A549 (cell line): ENCODE measurements at regions of chr19 and their contacts with region 1.

Region 1: DNA sequence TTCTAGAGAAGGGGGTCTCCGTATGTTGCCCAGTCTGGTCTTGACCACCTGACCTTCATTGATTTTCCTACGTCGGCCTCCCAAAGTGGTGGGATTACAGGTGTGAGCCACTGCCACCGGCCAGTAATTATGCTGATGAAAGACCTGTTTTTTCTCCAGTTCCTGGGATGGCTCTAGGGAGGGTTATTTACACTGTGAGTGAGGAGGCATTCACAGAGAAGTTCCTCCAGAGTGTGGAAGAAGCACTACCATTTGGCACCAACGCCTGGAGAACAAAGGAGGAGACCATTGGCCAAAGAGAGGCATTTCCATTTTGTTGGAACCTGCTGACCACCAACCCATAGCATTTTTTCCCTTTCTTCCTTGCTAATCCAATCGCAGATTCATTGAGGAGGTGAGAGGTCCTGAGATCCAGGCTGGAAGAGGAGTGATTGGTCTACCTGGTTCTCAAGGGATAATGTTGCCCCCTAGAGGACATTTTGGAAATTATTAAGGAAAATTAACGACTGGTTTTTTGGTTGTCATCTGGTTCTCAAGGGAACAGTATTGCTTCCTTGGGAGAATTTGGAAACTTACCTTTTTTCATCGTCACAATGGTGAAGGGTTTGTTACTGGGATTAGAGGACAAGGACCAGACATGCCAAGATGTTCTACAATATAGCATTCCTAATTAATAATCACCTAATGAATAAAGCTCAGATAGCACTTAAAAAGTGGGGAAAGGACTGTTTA is 5.5 kb upstream of the SAE1 start:
- DNase-seq: peak; percentile 86 to 90
- ATAC-seq: peak; percentile 84 to 85
- H3K4me3 ChIP-seq: no peak overlapping the region
- H3K27ac ChIP-seq: peak overlapping the region in 1 of 2 experiments; percentile 51; a peak in 3 of 6 replicates
- H3K4me1 ChIP-seq: peaks cover 33% of the 10 kb centered on the region
- CTCF ChIP-seq: peak; percentile 95
- EP300 ChIP-seq: no peak
- POLR2A ChIP-seq: no peak
- RAD21 ChIP-seq: peak; percentile 91 to 95

Region 2: DNA sequence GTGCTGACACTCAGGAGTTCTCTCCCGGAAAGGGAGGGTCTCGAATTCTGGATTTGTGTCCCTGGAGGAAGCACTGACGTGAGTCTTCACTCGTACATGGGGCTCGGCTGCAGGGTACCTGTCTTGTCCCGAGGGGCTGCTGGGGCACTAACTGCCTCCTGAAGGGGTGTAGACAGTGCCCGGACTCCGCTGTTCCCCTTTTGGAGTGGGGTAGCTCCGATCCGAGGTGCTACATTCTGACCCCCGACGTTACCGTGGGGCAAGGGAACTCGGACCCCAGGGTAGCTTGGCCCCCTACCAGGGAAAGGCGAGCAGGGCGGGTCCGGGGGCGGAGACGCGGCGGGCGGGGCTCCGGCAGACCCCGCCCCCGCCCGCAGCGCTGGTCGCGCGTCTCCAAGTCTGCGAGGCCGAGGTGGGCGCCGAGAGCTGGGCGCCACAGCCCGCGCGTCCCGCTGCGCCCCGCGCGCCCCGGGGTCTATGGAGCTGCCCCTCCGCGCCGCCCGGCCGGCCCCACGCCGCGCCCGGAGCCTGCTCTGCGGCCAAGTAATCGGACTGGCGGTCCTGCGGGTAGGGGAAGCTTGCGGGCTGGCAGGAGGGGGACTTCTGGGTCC is 105.6 kb before region 1 on chr19 and contains the start of gene NPAS1:
- CTCF ChIA-PET with region 1: interaction called, 128 read pairs
- POLR2A ChIA-PET with region 1: no interaction called
- DNase-seq: no peak
- ATAC-seq: peak; percentile 35 to 42; a peak in 5 of 6 replicates
- H3K4me3 ChIP-seq: peak within 1 kb of the TSS; percentile 50
- H3K27ac ChIP-seq: peak within 1 kb of the TSS in 1 of 2 experiments; percentile 70; a peak in 3 of 6 replicates
- H3K4me1 ChIP-seq: peaks cover 31% of the 10 kb centered on the region
- CTCF ChIP-seq: no peak
- EP300 ChIP-seq: no peak
- POLR2A ChIP-seq: no peak
- RAD21 ChIP-seq: no peak
- polyA plus RNA-seq, gene NPAS1: 1.3 and 1.5 TPM in 2 replicates

Region 3: DNA sequence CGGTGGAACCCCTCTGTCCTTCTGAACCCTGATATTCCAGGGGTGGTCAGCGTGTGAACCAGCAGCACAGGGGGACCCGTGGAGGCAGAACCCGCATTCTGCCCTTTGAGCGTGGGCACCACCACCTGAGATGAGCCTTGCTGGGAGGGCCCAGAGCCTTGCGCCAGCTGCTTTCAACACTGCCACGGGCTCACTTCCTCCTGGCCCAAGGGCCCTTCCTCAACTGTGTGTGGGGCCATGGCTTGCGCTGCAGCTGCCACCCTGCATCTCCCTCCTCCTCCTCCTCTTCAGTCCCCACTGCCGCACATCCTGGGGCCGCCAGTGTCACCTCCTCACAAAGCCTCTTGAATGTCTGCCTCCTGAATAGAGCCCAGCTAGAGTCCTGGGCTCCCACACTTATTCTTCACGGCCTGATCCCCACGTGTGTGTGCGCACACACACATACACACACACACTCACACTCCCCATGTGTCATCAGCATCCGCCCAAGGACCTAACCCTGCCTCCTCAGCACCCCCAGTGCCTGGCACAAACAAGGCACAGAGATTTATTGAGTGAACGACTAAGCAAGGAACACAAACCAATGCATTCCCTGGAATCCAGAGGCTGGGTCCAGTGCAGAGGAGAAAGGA is 49.8 kb before region 1 on chr19:
- CTCF ChIA-PET with region 1: interaction called, 72 read pairs
- POLR2A ChIA-PET with region 1: interaction called, 3 read pairs
- DNase-seq: no peak
- ATAC-seq: no peak
- H3K4me3 ChIP-seq: no peak overlapping the region
- H3K27ac ChIP-seq: no peak overlapping the region
- H3K4me1 ChIP-seq: peaks cover 8% of the 10 kb centered on the region
- CTCF ChIP-seq: no peak
- EP300 ChIP-seq: no peak
- POLR2A ChIP-seq: no peak
- RAD21 ChIP-seq: no peak

Region 4: GRCh38 chr19:47081111-47081510 is 44.0 kb before region 1 on chr19:
- CTCF ChIA-PET with region 1: interaction called, 72 read pairs
- POLR2A ChIA-PET with region 1: interaction called, 3 read pairs
- DNase-seq: no peak
- ATAC-seq: no peak
- H3K4me3 ChIP-seq: no peak overlapping the region
- H3K27ac ChIP-seq: no peak overlapping the region
- H3K4me1 ChIP-seq: peaks cover 8% of the 10 kb centered on the region
- CTCF ChIP-seq: no peak
- EP300 ChIP-seq: no peak
- POLR2A ChIP-seq: no peak
- RAD21 ChIP-seq: no peak

Region 5: GRCh38 chr19:47094557-47095475 is 30.3 kb before region 1 on chr19:
- CTCF ChIA-PET with region 1: interaction called, 12 read pairs
- POLR2A ChIA-PET with region 1: no interaction called
- DNase-seq: no peak
- ATAC-seq: no peak; a peak in 1 of 6 replicates
- H3K4me3 ChIP-seq: no peak overlapping the region
- H3K27ac ChIP-seq: peak overlapping the region; percentile 43 to 68; a peak in 3 of 6 replicates
- H3K4me1 ChIP-seq: peaks cover 26% of the 10 kb centered on the region
- CTCF ChIP-seq: no peak
- EP300 ChIP-seq: no peak
- POLR2A ChIP-seq: no peak
- RAD21 ChIP-seq: no peak